ENCODE measurements at regions of chr4 and their contacts with region 1.

Region 1: DNA sequence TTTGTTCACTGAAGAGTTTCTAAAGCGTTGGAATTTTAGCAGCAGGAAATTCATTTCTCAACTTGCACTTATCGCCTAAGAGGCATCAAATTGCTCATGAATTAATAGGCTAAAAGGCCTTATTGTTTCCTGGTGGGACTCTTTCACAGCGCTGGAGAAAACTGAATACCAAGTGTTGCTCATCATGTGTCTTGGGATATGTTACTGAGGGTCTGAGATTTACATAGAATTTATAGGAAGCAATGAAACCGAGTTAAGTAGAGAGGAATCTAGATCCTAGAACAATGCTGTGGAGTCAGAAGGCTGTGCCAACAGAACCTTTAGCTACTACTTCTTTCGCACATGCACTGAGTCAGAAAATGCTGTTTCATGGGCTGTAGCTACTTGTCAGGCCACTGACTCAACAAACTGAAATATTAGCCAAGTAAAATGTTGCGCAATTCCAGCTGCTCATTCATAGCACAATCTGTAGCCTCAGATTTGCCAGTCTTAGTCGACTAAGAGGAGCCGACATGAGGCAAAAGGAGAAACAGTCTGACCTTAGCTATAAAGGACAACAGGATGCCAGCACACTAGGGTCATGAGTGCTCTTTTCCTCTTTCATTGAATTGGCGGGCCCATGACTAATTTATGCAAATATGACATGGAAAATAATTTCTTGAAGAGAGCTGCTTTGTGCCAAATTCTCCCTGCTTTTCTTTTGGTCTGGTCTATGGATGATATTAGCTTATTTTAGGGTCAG is 35.9 kb upstream of the CXCL8 start:
- DNase-seq: peak; percentile 99
- H3K4me3 Mint-ChIP-seq: peak overlapping the region; percentile 29
- H3K27ac Mint-ChIP-seq: peak overlapping the region; percentile 95
- H3K4me1 Mint-ChIP-seq: peaks cover 58% of the 10 kb centered on the region
- H3K27me3 Mint-ChIP-seq: no peaks in the 10 kb centered on the region
- CTCF ChIP-seq: no peak

Region 2: DNA sequence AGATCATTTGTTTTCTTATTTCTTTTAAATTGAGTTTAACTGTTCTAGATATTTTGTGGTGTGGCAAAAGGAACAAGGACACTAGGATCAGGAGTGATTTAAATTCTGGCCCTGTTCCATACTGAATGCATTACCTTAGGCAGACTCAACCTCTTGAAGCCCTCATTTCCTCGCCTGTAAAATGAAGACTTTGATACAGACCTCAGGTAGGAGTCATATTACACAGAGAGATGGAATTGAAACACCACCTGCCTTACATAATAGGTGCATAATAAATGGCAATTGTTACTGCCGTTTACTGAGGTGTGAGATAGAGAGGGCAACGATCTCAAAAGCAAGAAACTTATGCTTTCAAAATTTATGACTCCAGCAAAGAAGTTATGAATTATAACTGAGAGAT is 56.0 kb before region 1 on chr4:
- CTCF ChIA-PET with region 1: no interaction called
- POLR2A ChIA-PET with region 1: no interaction called
- intact Hi-C with region 1: no loop called
- DNase-seq: no peak
- H3K4me3 Mint-ChIP-seq: no peak overlapping the region
- H3K27ac Mint-ChIP-seq: no peak overlapping the region
- H3K4me1 Mint-ChIP-seq: peaks cover 9% of the 10 kb centered on the region
- H3K27me3 Mint-ChIP-seq: no peaks in the 10 kb centered on the region
- CTCF ChIP-seq: no peak

Region 3: GRCh38 chr4:73676861-73677323 is 27.6 kb before region 1 on chr4:
- CTCF ChIA-PET with region 1: interaction called, 10 read pairs
- POLR2A ChIA-PET with region 1: interaction called, 10 read pairs
- intact Hi-C with region 1: no loop called
- DNase-seq: peak; percentile 93
- H3K4me3 Mint-ChIP-seq: no peak overlapping the region
- H3K27ac Mint-ChIP-seq: peak overlapping the region; percentile 39
- H3K4me1 Mint-ChIP-seq: peaks cover 28% of the 10 kb centered on the region
- H3K27me3 Mint-ChIP-seq: no peaks in the 10 kb centered on the region
- CTCF ChIP-seq: no peak

Region 4: GRCh38 chr4:73683033-73683432 is 21.5 kb before region 1 on chr4:
- CTCF ChIA-PET with region 1: no interaction called
- POLR2A ChIA-PET with region 1: interaction called, 10 read pairs
- intact Hi-C with region 1: no loop called
- DNase-seq: no peak
- H3K4me3 Mint-ChIP-seq: no peak overlapping the region
- H3K27ac Mint-ChIP-seq: peak overlapping the region; percentile 51
- H3K4me1 Mint-ChIP-seq: peaks cover 11% of the 10 kb centered on the region
- H3K27me3 Mint-ChIP-seq: no peaks in the 10 kb centered on the region
- CTCF ChIP-seq: no peak

Region 5: DNA sequence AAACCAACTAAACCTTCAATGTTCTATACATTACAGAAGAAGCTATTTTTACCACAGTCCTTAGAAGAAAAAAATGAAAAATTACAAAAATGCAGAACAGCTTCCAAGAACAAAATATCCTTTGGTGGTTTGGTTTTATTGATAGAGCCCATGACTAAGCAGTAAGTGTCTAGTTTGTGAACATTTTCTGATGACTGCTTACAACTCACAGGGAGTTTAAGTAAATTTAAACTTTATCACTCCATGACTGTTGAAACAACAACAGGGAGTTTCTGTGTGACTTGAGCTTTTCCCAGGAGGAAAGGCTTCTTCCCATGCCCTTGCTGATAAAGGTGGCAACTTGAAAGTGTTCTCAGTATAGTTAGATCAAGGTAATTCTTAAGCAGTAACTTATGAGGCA is 274.4 kb after region 1 on chr4:
- CTCF ChIA-PET with region 1: no interaction called
- POLR2A ChIA-PET with region 1: no interaction called
- intact Hi-C with region 1: no loop called
- DNase-seq: peak; percentile 36
- H3K4me3 Mint-ChIP-seq: no peak overlapping the region
- H3K27ac Mint-ChIP-seq: no peak overlapping the region
- H3K4me1 Mint-ChIP-seq: peaks cover 9% of the 10 kb centered on the region
- H3K27me3 Mint-ChIP-seq: no peaks in the 10 kb centered on the region
- CTCF ChIP-seq: no peak